Pancreas (tissue), 10 donors: ENCODE measurements at regions of chr16 and their contacts with region 1.

Region 1: GRCh38 chr16:11407047-11407982 is 62.1 kb downstream of the RMI2 start:
- DNase-seq: peak in 4 of 6 donors; percentile 40 to 75 (median 40)
- ATAC-seq: peak; percentile 67 to 90 (median 86)
- H3K4me3 ChIP-seq: no peak overlapping the region
- H3K27ac ChIP-seq: no peak overlapping the region
- H3K4me1 ChIP-seq: no peaks in the 10 kb centered on the region
- H3K27me3 ChIP-seq: no peaks in the 10 kb centered on the region
- CTCF ChIP-seq: peak; percentile 50 to 70 (median 58)

Region 2: DNA sequence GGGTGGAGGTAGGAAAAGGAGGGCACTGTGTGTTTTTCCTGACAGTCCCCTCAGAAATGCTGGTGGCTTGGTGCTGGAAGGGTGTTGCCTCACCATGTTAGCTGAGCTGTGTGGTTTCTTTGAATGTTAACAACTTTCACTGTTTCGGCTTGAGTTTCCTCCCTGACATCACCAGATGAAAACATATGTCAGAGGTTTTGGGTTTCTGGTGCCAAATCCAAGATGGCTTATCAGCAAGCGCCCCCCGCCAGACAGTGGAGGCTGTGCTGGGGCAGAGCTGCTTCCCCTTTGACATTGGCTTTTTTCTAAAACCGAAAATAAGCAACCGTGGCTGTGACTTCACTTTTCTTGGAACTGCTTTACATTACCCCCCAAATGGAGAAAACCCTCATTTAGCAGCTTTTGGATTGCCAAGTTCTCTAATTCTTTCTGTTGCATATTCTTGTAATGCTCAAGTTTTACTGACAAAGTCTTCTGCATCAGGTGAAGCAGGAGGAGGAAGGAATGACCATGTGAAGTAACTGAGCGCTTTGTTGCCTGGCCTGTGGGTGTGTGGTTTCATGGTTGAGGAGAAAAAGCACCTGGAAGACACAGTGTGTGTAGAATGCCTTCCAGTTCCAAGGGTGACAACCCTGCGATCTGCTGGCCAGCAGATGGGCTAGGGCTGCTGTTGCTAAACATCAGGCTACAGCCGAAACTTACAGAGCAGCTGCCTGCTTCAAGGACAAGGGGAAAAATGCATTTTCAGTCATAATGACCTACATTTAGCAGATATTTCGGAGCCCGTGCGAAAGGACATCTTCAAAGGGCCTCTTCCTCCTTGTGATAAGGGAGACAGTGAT is 52.4 kb before region 1 on chr16:
- intact Hi-C with region 1: no loop called
- DNase-seq: no peak
- ATAC-seq: no peak
- H3K4me3 ChIP-seq: no peak overlapping the region
- H3K27ac ChIP-seq: no peak overlapping the region
- H3K4me1 ChIP-seq: no peaks in the 10 kb centered on the region
- H3K27me3 ChIP-seq: no peaks in the 10 kb centered on the region
- CTCF ChIP-seq: no peak

Region 3: DNA sequence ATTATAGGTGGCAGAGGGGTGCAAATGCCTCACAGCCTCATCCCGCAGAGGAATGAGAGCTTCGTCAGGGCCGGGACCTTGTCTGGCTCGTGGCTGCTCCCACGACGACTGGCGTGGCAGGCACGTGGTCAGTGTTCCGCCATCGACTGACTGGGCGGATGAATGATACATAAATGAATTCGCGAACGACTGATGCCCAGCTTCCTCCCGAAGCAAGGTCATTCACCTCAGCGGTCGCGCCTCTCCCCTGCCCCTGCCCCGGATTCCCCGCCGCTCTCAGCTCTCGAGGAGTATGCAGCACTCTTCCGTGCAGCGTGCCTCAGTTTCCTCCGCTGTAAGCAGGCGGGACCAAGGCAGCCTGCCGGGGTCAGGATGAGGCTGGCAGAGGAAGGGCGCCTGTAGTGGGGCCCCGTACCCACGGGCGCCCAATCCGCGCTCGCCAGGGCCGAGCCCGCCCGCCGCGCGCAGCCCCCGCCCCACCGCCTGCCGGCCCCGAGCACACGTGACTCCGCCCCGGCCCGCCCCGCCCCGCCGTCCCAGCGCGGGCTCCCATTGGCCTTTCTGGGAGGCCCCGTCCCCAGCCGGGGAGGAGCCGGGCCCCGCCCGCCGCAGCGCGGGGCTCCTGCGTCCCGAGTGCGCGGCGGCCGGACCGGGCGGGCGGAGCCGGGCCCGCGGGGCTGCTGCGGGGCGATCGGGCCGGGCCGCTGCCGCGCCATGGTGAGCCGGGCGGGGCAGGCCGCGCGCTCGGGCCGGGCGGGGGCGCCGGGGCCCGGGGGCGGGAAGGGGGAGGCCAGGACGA is 260.7 kb after region 1 on chr16 and contains the start of gene SNN:
- intact Hi-C with region 1: loop called in 1 of 3 experiments (anchors 10 kb)
- DNase-seq: peak; percentile 82 to 96 (median 91)
- ATAC-seq: peak; percentile 91 to 96 (median 94)
- H3K4me3 ChIP-seq: peak within 1 kb of the TSS; percentile 61 to 77 (median 72)
- H3K27ac ChIP-seq: peak within 1 kb of the TSS in 3 of 4 donors; percentile 6 to 30 (median 18)
- H3K4me1 ChIP-seq: peaks cover 0 to 10% (median 5%) of the 10 kb centered on the region in 3 donors
- H3K27me3 ChIP-seq: no peaks in the 10 kb centered on the region
- CTCF ChIP-seq: no peak
- total RNA-seq, gene SNN: 3.9 to 10.6 (median 4.5) TPM